ENCODE measurements at regions of chr7 and their contacts with region 1.

Region 1: GRCh38 chr7:17651926-17652385 is 288.3 kb downstream of the SNX13 start:
- DNase-seq: peak; percentile 73
- H3K4me3 Mint-ChIP-seq: no peak overlapping the region
- H3K27ac Mint-ChIP-seq: peak overlapping the region; percentile 86
- H3K4me1 Mint-ChIP-seq: peaks cover 44% of the 10 kb centered on the region
- H3K27me3 Mint-ChIP-seq: no peaks in the 10 kb centered on the region
- CTCF ChIP-seq: peak; percentile 16

Region 2: GRCh38 chr7:17640730-17641377 is 11.1 kb before region 1 on chr7:
- CTCF ChIA-PET with region 1: interaction called, 10 read pairs
- POLR2A ChIA-PET with region 1: interaction called, 6 read pairs
- intact Hi-C with region 1: no loop called
- DNase-seq: peak; percentile 66
- H3K4me3 Mint-ChIP-seq: no peak overlapping the region
- H3K27ac Mint-ChIP-seq: no peak overlapping the region
- H3K4me1 Mint-ChIP-seq: peaks cover 19% of the 10 kb centered on the region
- H3K27me3 Mint-ChIP-seq: no peaks in the 10 kb centered on the region
- CTCF ChIP-seq: peak; percentile 48

Region 3: DNA sequence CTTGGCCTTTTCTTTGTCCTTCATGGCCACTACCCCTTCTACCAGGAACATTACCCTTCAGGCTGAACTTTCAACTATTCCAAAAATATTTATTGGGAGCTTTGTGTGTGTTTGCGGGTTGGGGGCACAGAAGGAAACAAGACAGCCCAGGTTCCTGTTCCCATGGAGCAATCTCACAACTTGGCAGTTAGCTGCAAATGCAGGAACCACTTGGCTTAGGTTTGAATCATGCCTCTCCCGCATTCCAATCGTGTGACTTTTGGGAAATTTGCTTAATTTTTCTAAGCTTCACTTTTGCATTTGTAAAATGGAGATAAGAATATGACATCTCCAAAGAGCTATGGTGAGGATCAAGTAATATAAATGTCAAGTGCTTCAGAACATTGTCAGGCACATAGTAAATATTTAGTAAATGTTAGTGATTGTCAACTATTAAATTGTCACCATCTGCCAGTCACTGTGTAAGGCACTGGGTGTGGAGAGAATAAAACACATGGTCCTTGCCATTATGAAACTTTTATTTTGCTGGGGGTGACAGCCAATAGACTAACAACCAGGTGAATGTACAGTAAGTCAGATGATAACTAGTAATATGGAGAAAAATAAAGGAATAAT is 11.2 kb after region 1 on chr7:
- CTCF ChIA-PET with region 1: interaction called, 3 read pairs
- POLR2A ChIA-PET with region 1: interaction called, 21 read pairs
- intact Hi-C with region 1: no loop called
- DNase-seq: peak; percentile 74
- H3K4me3 Mint-ChIP-seq: peak overlapping the region; percentile 16
- H3K27ac Mint-ChIP-seq: peak overlapping the region; percentile 40
- H3K4me1 Mint-ChIP-seq: peaks cover 21% of the 10 kb centered on the region
- H3K27me3 Mint-ChIP-seq: no peaks in the 10 kb centered on the region
- CTCF ChIP-seq: no peak

Region 4: DNA sequence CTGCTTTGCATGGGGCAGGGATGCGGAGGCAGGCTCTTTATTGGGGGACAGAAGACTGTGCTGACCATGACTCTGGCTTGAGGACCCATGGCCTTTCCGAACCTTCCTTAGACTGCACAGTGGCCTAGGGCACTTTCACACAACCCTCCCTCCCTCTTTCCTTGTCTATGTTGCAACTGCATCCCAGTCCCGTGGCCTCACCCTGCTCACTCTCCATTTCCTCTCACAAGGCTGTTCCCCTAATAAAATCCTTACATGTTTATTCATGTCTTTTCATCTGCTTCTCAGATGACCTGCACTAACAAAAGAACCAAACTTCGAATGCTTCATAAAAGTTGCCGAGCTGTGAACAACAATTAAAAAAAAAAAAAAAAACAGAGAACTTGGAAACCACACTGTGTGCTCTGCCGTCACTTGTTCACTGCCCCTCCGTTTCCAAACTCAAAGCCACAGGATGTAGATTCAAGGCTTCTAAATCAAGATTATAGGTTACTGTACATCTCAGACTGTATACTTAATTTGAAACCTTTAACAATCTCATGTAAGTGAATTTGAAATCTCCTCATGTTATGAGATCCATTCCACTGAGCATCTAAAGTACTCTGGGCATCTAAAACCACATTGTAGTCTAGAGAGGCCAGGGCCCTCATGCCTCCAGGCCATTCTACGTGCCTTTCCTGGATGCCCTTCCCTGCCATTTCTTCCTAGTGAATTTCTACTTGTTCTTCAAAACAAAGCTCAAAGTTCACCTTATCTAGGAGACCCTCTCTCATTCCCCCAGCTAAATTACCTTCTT is 22.4 kb after region 1 on chr7:
- CTCF ChIA-PET with region 1: interaction called, 6 read pairs
- POLR2A ChIA-PET with region 1: interaction called, 22 read pairs
- intact Hi-C with region 1: no loop called
- DNase-seq: peak; percentile 79
- H3K4me3 Mint-ChIP-seq: no peak overlapping the region
- H3K27ac Mint-ChIP-seq: peak overlapping the region; percentile 97
- H3K4me1 Mint-ChIP-seq: peaks cover 59% of the 10 kb centered on the region
- H3K27me3 Mint-ChIP-seq: no peaks in the 10 kb centered on the region
- CTCF ChIP-seq: no peak

Region 5: GRCh38 chr7:17680943-17681351 is 29.0 kb after region 1 on chr7:
- CTCF ChIA-PET with region 1: interaction called, 7 read pairs
- POLR2A ChIA-PET with region 1: interaction called, 22 read pairs
- intact Hi-C with region 1: no loop called
- DNase-seq: peak; percentile 41
- H3K4me3 Mint-ChIP-seq: peak overlapping the region; percentile 37
- H3K27ac Mint-ChIP-seq: peak overlapping the region; percentile 95
- H3K4me1 Mint-ChIP-seq: peaks cover 69% of the 10 kb centered on the region
- H3K27me3 Mint-ChIP-seq: no peaks in the 10 kb centered on the region
- CTCF ChIP-seq: peak; percentile 35

Region 6: DNA sequence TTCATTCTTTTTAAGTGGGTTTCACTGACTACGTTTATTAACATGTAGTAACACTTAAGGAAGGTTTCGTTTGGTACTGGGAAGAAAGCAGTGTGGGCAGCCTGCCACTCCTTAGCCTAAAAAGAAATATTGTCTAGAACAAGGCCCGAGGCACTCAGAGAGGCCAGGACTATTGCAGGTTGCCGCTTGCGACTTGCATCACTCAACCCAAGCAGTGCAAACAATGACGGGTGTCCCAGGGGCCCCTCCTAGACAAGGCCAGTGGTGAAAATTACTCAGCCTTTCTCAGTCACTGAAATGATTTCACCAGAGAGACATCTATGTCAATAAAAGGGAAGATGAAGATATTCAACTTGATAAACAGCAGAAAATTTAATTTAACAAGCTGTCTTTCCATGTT is 44.5 kb after region 1 on chr7:
- CTCF ChIA-PET with region 1: interaction called, 7 read pairs
- POLR2A ChIA-PET with region 1: interaction called, 18 read pairs
- intact Hi-C with region 1: loop called (anchors 5 kb)
- DNase-seq: peak; percentile 99
- H3K4me3 Mint-ChIP-seq: no peak overlapping the region
- H3K27ac Mint-ChIP-seq: peak overlapping the region; percentile 89
- H3K4me1 Mint-ChIP-seq: peaks cover 20% of the 10 kb centered on the region
- H3K27me3 Mint-ChIP-seq: no peaks in the 10 kb centered on the region
- CTCF ChIP-seq: no peak